Activated naive CD4-positive, alpha-beta T cell treated with anti-CD3 and anti-CD28 coated beads for 36 hours (primary cell): ENCODE measurements at regions of chr7 and their contacts with region 1.

Region 1: GRCh38 chr7:129611246-129612111 is at the start of gene NRF1:
- DNase-seq: peak; percentile 91
- H3K4me3 Mint-ChIP-seq: peak within 1 kb of the TSS; percentile 97
- H3K27ac Mint-ChIP-seq: peak within 1 kb of the TSS; percentile 98
- H3K4me1 Mint-ChIP-seq: peaks cover 56% of the 10 kb centered on the region
- H3K27me3 Mint-ChIP-seq: no peaks in the 10 kb centered on the region
- total RNA-seq, gene NRF1: 18.5 to 21.5 TPM

Region 2: DNA sequence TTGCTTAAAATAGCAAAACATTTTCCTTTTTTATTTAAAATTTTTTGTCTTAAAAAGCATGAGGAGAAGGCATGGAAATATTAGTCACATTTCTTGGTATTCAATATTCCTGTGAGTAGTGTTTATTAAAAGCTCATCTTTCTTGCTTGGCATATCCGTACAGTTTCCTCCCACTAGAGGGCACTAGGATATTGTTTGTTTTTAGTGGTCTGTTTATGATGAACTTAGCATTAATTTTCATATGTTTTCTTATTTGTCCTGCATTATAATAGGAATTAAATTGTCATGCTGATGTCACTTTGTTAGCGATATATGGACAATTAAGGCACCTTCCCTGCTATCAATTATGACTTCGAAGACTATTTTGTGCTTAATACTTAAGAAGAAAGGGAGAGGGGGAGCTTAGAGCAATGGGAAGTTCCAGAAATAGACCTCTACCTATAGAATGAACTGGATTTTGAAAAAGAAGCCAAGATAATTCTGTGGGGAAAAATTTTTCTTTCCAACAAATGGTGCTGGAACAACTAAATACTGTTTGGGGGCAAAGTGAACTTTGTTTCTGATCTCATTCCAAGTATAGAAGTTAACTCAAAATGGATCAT is 268.3 kb before region 1 on chr7:
- CTCF ChIA-PET with region 1: no interaction called
- intact Hi-C with region 1: loop called (anchors 2 kb)
- DNase-seq: peak; percentile 39
- H3K4me3 Mint-ChIP-seq: no peak overlapping the region
- H3K27ac Mint-ChIP-seq: no peak overlapping the region
- H3K4me1 Mint-ChIP-seq: peaks cover 32% of the 10 kb centered on the region
- H3K27me3 Mint-ChIP-seq: no peaks in the 10 kb centered on the region

Region 3: DNA sequence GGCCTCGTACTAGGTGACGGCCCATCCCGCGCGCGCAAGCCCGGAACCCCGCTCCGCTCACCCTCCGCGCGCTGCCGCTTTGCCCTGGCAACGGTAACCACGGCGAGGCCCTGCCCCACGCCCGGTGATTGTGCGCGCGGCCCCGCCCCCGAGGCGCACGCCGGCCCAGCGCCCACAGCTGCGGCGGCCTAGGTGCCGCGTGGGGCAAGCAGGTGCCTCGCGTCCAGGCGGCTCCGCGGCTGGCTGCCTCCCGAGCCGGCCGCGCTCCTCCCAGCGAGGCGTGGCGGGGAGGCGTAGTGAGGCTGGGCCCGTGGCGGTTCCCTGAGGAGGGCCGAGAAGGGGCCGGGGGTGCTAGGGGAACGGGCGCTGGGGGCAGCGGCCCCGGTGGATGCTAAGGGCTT is 109.1 kb before region 1 on chr7 and contains the start of gene SMKR1:
- CTCF ChIA-PET with region 1: no interaction called
- intact Hi-C with region 1: loop called (anchors 1 kb)
- DNase-seq: peak; percentile 86
- H3K4me3 Mint-ChIP-seq: peak within 1 kb of the TSS; percentile 75
- H3K27ac Mint-ChIP-seq: no peak within 1 kb of the TSS
- H3K4me1 Mint-ChIP-seq: peaks cover 9% of the 10 kb centered on the region
- H3K27me3 Mint-ChIP-seq: no peaks in the 10 kb centered on the region
- total RNA-seq, gene SMKR1: 0.99 to 1.2 TPM

Region 4: DNA sequence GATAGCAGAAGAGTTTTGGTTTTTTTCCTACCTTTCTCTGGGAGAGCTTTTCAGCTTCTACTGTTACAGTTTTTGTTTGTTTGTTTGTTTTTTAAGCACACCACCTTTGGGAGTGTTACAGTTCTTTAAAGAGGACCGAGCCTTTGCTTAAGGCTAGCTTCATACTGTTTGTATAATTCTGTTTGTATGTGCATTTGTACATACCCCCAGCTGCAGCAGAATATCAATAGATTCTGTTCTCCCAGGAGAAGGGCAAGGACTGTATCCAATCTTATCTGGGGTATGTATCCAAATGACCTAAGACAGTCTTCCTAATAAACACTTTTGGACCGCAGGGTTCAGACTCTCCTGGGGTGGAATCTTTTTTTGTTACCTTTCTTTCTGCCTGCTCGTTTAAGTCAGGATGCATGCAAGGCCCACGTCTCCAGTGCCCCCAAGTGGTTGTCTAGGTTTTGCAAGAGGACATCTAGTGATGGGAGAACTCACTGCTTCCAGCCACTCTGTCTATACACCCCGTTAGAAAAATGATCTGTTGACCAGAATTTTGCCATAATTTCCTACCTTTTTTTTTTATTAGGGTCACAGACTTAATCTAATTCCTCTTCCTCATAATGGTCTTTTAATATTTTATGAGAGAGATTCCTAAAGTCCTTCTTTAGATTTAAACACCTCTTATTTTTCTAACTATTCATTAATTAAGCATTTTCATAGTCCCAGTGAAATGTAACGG is 24.0 kb after region 1 on chr7:
- CTCF ChIA-PET with region 1: interaction called, 12 read pairs
- intact Hi-C with region 1: loop called (anchors 1 kb)
- DNase-seq: peak; percentile 89
- H3K4me3 Mint-ChIP-seq: no peak overlapping the region
- H3K27ac Mint-ChIP-seq: no peak overlapping the region
- H3K4me1 Mint-ChIP-seq: peaks cover 45% of the 10 kb centered on the region
- H3K27me3 Mint-ChIP-seq: no peaks in the 10 kb centered on the region

Region 5: DNA sequence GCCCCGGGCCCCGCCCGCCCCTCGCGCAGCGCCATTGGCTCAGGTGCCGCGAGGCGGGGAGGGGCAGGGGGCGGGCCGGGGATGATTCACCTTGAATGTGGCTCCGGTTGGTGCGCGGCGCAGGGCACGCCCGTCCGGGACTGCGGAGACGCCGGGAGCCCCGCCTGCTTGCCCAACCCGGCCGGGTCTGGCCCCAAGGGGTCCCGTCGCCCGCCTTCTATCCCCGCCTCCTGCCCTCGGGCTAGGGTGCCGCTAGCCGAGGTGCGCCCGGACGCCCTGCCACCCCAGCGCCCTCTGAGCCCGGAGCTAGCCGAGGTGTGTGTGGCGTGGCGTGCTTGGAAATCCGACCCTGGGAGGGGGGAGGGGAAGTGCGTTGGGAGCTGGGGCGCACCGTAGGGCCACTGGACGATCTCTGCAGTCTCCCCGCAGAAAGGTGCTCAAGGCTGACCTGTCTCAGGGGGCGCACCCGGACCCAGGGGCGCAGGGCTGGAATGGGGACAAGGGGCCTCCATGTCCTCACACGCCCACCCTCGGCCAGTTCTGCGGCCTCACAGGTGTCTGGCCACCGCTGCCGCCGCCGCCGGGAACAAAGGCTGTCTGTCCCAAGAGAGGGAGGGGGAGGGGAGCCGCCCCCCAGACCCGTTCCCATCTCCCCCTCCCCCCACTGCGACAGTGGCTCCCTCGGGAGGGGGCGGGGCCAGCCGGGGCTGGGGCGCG is 168.9 kb after region 1 on chr7:
- CTCF ChIA-PET with region 1: no interaction called
- intact Hi-C with region 1: loop called (anchors 2 kb)
- DNase-seq: peak; percentile 91
- H3K4me3 Mint-ChIP-seq: peak overlapping the region; percentile 73
- H3K27ac Mint-ChIP-seq: no peak overlapping the region
- H3K4me1 Mint-ChIP-seq: peaks cover 40% of the 10 kb centered on the region
- H3K27me3 Mint-ChIP-seq: peaks cover 57% of the 10 kb centered on the region